CD8-positive, alpha-beta T cell (primary cell): ENCODE measurements at regions of chr15 and their contacts with region 1.

Region 1: GRCh38 chr15:70447928-70448698 is 315.2 kb downstream of the UACA start:
- DNase-seq: peak; percentile 14 to 74 (median 54)
- ATAC-seq: peak; percentile 69
- H3K4me3 ChIP-seq: peak overlapping the region; percentile 20 to 35
- H3K4me3 Mint-ChIP-seq: peak overlapping the region; percentile 65
- H3K27ac ChIP-seq: peak overlapping the region in 1 of 2 experiments; percentile 31
- H3K27ac Mint-ChIP-seq: peak overlapping the region; percentile 41
- H3K4me1 ChIP-seq: peaks cover 44% of the 10 kb centered on the region
- H3K4me1 Mint-ChIP-seq: peaks cover 42% of the 10 kb centered on the region
- H3K27me3 ChIP-seq: peaks cover 0 to 7% of the 10 kb centered on the region in 2 experiments
- H3K27me3 Mint-ChIP-seq: peaks cover 3% of the 10 kb centered on the region
- CTCF ChIP-seq: no peak

Region 2: DNA sequence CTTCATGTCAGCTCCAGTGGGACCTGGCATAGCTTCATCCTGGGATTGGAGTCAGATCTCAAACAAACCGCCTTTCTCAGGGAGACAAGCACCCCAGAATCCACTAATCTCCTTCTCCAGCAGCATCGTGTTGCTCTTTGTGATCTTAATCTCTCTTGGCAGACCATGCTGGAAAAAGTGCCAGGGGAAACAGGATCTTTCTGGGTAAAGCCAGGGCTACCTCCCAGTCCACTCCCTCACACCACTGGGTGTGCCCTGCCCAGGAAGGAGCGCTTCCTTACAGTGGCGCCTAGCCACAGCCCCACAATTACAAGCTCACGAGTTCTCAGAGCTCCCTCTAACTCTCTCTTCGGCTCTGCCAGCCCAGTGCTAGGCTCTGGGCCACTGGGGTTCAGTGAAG is 963.3 kb before region 1 on chr15:
- CTCF ChIA-PET with region 1: no interaction called
- POLR2A ChIA-PET with region 1: no interaction called
- intact Hi-C with region 1: loop called in 1 of 2 experiments (anchors 5 kb)
- DNase-seq: no peak
- ATAC-seq: no peak
- H3K4me3 ChIP-seq: no peak overlapping the region
- H3K4me3 Mint-ChIP-seq: no peak overlapping the region
- H3K27ac ChIP-seq: no peak overlapping the region
- H3K27ac Mint-ChIP-seq: no peak overlapping the region
- H3K4me1 ChIP-seq: no peaks in the 10 kb centered on the region
- H3K4me1 Mint-ChIP-seq: no peaks in the 10 kb centered on the region
- H3K27me3 ChIP-seq: no peaks in the 10 kb centered on the region
- H3K27me3 Mint-ChIP-seq: no peaks in the 10 kb centered on the region
- CTCF ChIP-seq: no peak

Region 3: GRCh38 chr15:70271422-70272088 is 176.6 kb before region 1 on chr15:
- CTCF ChIA-PET with region 1: no interaction called
- POLR2A ChIA-PET with region 1: no interaction called
- intact Hi-C with region 1: loop called in 1 of 2 experiments (anchors 10 kb)
- DNase-seq: peak in 1 of 9 experiments; percentile 35
- ATAC-seq: no peak
- H3K4me3 ChIP-seq: no peak overlapping the region
- H3K4me3 Mint-ChIP-seq: no peak overlapping the region
- H3K27ac ChIP-seq: no peak overlapping the region
- H3K27ac Mint-ChIP-seq: no peak overlapping the region
- H3K4me1 ChIP-seq: peaks cover 17% of the 10 kb centered on the region
- H3K4me1 Mint-ChIP-seq: peaks cover 26% of the 10 kb centered on the region
- H3K27me3 ChIP-seq: no peaks in the 10 kb centered on the region
- H3K27me3 Mint-ChIP-seq: peaks cover 3% of the 10 kb centered on the region
- CTCF ChIP-seq: no peak